AG04449 (cell line): ENCODE measurements at regions of chr5 and their contacts with region 1.

Region 1: GRCh38 chr5:31809050-31809870 is 170.3 kb downstream of the PDZD2 start:
- DNase-seq: peak; percentile 5
- H3K4me3 ChIP-seq: no peak overlapping the region
- CTCF ChIP-seq: peak; percentile 77

Region 2: GRCh38 chr5:31581498-31582099 is 227.7 kb before region 1 on chr5:
- CTCF ChIA-PET with region 1: interaction called, 38 read pairs
- POLR2A ChIA-PET with region 1: no interaction called
- DNase-seq: no peak
- H3K4me3 ChIP-seq: no peak overlapping the region
- CTCF ChIP-seq: no peak

Region 3: GRCh38 chr5:31664566-31664965 is 144.7 kb before region 1 on chr5:
- CTCF ChIA-PET with region 1: no interaction called
- POLR2A ChIA-PET with region 1: no interaction called
- DNase-seq: no peak
- H3K4me3 ChIP-seq: no peak overlapping the region
- CTCF ChIP-seq: no peak

Region 4: GRCh38 chr5:32147236-32147635 is 338.0 kb after region 1 on chr5:
- CTCF ChIA-PET with region 1: no interaction called
- POLR2A ChIA-PET with region 1: no interaction called
- DNase-seq: no peak
- H3K4me3 ChIP-seq: no peak overlapping the region
- CTCF ChIP-seq: no peak